Stomach (tissue), 19 donors: ENCODE measurements at regions of chr11 and their contacts with region 1.

Region 1: DNA sequence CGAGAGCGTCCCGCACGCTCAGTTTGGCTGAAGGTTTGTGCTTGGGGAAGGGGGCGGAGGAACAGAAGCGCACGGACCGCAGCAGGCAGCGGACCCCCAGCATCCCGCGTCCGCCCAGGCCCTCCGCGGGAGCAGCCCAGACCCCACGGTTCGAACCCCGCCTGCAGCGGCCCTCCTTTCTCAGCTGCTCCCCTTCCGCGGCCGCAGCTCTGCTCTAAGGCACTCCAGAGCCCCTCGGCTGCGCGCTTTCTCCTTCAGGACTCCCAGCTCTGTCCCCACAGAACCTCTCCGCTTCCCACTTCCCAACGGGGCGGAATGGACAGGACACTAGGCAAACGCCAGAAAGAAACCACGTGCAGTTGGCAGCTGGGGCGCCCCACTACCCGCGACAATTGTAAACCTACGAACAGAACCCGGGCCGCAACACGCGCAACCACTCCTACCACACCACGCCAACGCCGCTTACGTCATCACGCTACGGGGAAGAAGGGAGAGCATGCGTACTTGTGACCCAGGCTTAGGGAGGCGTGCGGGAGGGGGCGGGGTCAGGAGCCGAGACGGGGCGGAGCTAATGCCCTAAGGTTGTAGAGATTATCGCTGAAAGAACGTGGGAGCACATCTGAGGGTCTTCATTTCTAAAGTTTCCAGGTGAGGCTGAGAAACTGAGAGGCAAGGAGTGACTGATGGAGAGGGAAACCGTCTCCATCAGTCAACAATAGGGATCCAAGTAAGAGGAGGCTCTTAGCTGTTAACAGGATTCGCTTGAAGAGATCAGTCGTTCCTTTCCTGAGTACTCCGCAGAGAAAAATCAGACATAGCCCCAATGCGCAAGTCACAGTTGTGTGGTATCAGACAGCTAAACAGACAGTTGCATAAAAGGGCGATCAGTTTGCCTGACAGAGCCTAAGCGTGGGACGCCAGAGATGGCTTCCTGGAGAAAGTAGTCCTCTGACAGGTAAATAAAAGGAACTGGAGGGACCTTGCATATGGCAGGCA is at the start of gene NARS2:
- DNase-seq: peak; percentile 98 to 99
- H3K4me3 ChIP-seq: peak within 1 kb of the TSS; percentile 85 to 92 (median 88)
- H3K27ac ChIP-seq: peak within 1 kb of the TSS; percentile 85 to 94 (median 90)
- H3K4me1 ChIP-seq: peaks cover 6 to 31% (median 23%) of the 10 kb centered on the region in 4 donors
- H3K27me3 ChIP-seq: no peaks in the 10 kb centered on the region
- CTCF ChIP-seq: no peak
- EP300 ChIP-seq: no peak
- POLR2A ChIP-seq: peak in 2 of 4 donors; percentile 57 to 78
- total RNA-seq, gene NARS2: 4.7 to 34.5 (median 14.5) TPM

Region 2: GRCh38 chr11:78298291-78298771 is 276.4 kb before region 1 on chr11:
- intact Hi-C with region 1: no loop called
- DNase-seq: no peak
- H3K4me3 ChIP-seq: no peak overlapping the region
- H3K27ac ChIP-seq: peak overlapping the region in 2 of 5 donors; percentile 10 to 24
- H3K4me1 ChIP-seq: peaks cover 0 to 24% (median 7%) of the 10 kb centered on the region in 4 donors
- H3K27me3 ChIP-seq: no peaks in the 10 kb centered on the region
- CTCF ChIP-seq: no peak
- EP300 ChIP-seq: no peak
- POLR2A ChIP-seq: no peak

Region 3: DNA sequence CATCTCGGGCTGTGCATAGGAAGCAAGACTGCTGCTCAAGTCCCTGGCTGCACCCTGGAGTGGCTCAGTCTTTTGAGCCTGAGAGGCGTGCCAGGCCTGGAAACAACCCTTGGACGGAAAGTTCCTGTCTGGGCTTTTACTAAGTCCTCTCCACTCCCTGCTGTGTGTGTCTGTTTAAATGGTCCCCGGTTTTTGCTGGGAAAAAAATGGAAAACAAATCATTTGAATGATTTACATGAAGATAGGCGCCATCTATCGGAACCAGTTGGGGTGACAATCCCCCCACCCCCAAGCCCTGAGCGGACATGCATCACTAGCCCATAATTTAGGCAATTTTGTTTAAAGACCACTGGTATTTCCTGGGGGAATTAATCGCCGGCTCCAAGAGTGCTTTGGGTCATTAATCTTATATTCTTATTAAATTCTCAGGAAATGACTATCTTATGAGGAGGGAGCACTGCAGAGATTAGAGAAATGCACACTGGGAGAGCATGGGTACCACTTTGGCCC is 154.4 kb before region 1 on chr11:
- intact Hi-C with region 1: loop called (anchors 10 kb)
- DNase-seq: peak; percentile 59 to 90
- H3K4me3 ChIP-seq: peak overlapping the region in 1 of 4 donors; percentile 2
- H3K27ac ChIP-seq: peak overlapping the region in 4 of 5 donors; percentile 50 to 99 (median 96)
- H3K4me1 ChIP-seq: peaks cover 23 to 44% (median 38%) of the 10 kb centered on the region in 4 donors
- H3K27me3 ChIP-seq: no peaks in the 10 kb centered on the region
- CTCF ChIP-seq: peak in 5 of 7 experiments; percentile 28 to 68 (median 48)
- EP300 ChIP-seq: no peak
- POLR2A ChIP-seq: no peak